Activated CD4-positive, alpha-beta T cell treated with anti-CD3 and anti-CD28 coated beads for 36 hours (primary cell): ENCODE measurements at regions of chr19 and their contacts with region 1.

Region 1: DNA sequence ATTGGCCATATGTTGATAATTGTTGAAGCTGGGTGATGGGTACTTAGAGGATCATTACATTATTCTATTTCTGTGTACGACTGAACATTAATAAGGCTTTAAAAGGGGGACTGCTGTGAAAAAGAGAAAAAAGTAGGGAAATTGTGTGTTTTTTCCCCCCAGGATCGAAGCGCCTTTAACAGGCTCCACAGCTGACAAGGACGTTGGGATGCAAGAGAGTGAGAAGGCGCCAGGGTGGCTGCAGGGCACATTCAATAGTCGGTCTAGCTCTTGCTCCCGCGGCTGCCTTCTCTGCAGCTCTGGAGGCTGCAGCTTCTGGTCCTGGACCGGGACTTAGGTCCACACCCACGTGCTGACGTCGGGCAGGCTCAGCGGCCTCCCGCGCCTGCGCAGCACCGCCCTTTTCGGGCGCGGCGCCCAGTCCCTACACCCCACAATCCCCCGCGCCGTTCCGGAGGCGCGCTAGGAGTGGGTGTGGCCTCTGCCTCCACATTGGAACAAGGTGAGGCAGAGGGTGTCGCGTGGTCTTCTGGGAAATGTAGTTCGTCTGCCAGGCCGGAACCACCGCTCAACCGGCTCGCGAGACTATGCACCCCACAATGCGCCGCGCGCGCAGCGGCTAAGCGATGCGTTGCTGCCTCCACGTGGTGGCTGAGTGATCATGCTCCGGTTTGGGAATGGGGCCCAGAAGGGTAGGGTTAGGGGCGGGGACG is 4.9 kb upstream of the LRFN3 start:
- DNase-seq: peak; percentile 100
- ATAC-seq: peak; percentile 96
- H3K4me3 Mint-ChIP-seq: peak overlapping the region; percentile 67
- H3K27ac Mint-ChIP-seq: peak overlapping the region; percentile 86
- H3K4me1 Mint-ChIP-seq: peaks cover 26% of the 10 kb centered on the region
- H3K27me3 Mint-ChIP-seq: no peaks in the 10 kb centered on the region

Region 2: GRCh38 chr19:35347171-35347929 is 584.0 kb before region 1 on chr19 and contains the start of gene FFAR1:
- CTCF ChIA-PET with region 1: no interaction called
- POLR2A ChIA-PET with region 1: no interaction called
- intact Hi-C with region 1: no loop called
- DNase-seq: peak; percentile 85
- ATAC-seq: peak; percentile 74
- H3K4me3 Mint-ChIP-seq: peak within 1 kb of the TSS; percentile 67
- H3K27ac Mint-ChIP-seq: peak within 1 kb of the TSS; percentile 99
- H3K4me1 Mint-ChIP-seq: peaks cover 36% of the 10 kb centered on the region
- H3K27me3 Mint-ChIP-seq: peaks cover 3% of the 10 kb centered on the region
- total RNA-seq, gene FFAR1: 0.23 to 0.35 TPM

Region 3: GRCh38 chr19:35648017-35648961 is 283.0 kb before region 1 on chr19 and contains the start of gene COX6B1:
- CTCF ChIA-PET with region 1: no interaction called
- POLR2A ChIA-PET with region 1: no interaction called
- intact Hi-C with region 1: loop called in 1 of 2 experiments (anchors 1 kb)
- DNase-seq: peak; percentile 95
- ATAC-seq: peak; percentile 76
- H3K4me3 Mint-ChIP-seq: peak within 1 kb of the TSS; percentile 92
- H3K27ac Mint-ChIP-seq: peak within 1 kb of the TSS; percentile 84
- H3K4me1 Mint-ChIP-seq: peaks cover 39% of the 10 kb centered on the region
- H3K27me3 Mint-ChIP-seq: no peaks in the 10 kb centered on the region
- total RNA-seq, gene COX6B1: 385 to 437 TPM

Region 4: DNA sequence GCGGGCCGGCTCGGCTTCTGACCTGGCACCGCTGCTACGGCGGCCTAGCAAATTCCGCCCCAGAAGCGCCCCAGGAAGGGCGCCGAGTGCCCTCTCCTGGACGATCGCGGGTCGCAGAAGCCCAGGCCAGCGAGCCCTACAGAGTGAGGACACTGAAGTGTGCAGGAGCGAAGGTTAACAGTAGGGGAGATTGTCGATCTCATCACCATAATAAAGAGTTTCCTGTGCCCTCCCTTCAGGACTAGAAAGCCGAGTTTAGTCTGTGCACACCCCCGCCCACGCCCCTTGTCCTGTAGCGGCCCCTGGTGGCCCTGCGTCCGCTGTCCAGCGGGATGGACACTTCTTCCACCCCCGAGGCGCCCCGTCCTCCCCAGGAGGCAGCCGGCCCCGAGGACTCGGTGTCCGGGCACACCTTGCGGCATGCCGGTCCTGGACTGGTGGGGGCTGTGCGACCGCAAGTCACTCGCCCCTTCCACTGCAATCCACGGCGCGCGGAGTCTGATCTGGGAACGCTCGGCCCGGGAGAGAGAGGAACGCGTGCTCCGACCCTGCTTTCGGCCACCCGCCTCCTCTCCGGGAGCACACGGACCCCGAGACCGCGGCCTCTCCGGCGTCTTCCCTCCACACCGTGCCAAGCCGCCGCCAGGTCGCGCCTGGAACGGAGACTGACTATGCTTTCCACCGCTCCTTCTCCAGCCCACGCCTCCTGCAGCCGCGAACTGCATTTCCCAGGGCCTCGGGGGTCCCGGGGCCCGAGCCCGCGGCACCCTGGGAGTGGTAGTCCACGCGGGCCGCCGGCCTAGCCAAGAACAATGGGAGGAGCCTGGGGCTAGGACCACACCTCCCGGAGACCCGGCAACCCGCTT is 214.3 kb before region 1 on chr19:
- CTCF ChIA-PET with region 1: no interaction called
- POLR2A ChIA-PET with region 1: interaction called, 6 read pairs
- intact Hi-C with region 1: loop called (anchors 1 kb)
- DNase-seq: peak; percentile 98
- ATAC-seq: peak; percentile 61
- H3K4me3 Mint-ChIP-seq: peak overlapping the region; percentile 97
- H3K27ac Mint-ChIP-seq: peak overlapping the region; percentile 90
- H3K4me1 Mint-ChIP-seq: peaks cover 41% of the 10 kb centered on the region
- H3K27me3 Mint-ChIP-seq: no peaks in the 10 kb centered on the region

Region 5: DNA sequence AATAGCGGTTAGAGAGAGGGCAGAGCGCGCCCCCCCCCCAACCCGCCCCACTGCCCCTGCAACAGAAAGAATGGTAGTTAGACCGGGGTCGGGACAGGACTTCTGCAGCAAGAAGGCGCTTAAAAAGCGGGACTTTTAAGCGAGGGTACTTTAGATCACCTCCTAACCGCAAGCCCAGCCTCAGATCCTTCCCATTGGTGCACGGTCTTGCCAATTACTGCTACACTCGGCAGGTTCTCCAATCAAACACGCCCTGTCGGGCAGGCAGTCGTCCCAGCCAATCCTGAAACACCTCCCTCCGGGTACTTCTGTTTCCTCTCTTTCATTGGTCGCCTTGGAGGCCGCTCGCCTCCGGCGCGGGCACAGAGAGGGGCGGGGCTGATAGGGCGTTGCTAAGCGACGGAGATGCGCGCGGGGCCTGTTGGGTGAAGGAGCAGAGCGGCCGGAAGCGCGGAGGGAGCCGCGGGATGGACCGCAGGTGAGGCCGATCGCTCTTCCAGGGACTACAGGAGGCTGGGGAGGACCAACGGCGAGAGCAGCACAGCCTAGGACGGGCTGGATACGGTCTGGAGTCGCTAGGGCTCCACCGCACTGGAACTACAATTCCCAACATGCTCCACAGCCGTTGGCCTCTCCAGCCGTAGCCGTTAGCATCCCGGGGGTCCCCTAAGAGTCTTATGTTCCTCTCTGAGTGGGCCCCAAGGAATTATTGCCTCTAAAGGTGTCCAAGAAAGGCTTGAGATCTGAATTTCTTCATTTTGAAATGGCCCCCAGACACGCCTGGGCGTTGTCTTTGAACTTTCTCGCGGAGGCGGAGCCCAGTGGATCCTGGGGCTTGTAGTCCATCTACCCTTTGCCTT is 173.3 kb before region 1 on chr19 and contains the start of gene PROSER3:
- CTCF ChIA-PET with region 1: no interaction called
- POLR2A ChIA-PET with region 1: no interaction called
- intact Hi-C with region 1: loop called in 1 of 2 experiments (anchors 1 kb)
- DNase-seq: peak; percentile 99
- ATAC-seq: peak; percentile 98
- H3K4me3 Mint-ChIP-seq: peak within 1 kb of the TSS; percentile 85
- H3K27ac Mint-ChIP-seq: peak within 1 kb of the TSS; percentile 91
- H3K4me1 Mint-ChIP-seq: peaks cover 29% of the 10 kb centered on the region
- H3K27me3 Mint-ChIP-seq: peaks cover 4% of the 10 kb centered on the region
- total RNA-seq, gene PROSER3: 39.8 to 62.8 TPM

Region 6: DNA sequence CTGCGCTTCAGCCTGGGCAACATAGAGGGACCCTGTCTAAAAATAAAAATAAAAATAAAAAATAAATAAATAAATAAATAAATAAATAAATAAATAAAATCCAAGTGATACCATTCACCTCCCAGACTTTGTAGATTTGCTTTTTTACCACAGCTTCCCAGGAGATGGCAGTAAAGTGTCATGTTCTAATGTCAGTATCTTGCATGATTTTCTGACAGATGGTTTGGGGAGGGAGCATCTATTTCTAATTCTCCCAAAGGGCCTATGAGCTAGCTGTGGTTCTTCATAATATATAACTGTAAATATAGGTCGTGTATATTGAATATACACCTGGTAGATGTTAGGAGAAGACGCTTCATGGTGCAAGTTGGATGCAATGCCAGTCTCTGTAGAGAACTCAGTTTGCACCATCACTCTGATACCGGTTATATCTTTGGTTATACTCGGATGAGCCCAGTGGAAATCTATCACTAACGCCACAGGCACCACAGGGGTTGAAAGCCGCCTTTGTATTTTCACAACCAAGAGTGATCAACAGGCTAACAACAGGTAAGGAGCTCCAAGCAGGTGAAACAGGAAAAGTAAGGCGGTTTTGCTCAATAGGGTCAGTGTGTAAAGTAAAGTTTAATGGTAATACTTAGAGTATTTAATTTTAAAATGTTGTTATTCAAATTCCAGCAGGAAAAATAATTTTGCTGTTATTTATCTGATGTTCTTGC is 49.0 kb before region 1 on chr19:
- CTCF ChIA-PET with region 1: interaction called, 52 read pairs
- POLR2A ChIA-PET with region 1: interaction called, 3 read pairs
- intact Hi-C with region 1: loop called (anchors 1 kb)
- DNase-seq: peak; percentile 35
- ATAC-seq: peak; percentile 53
- H3K4me3 Mint-ChIP-seq: no peak overlapping the region
- H3K27ac Mint-ChIP-seq: no peak overlapping the region
- H3K4me1 Mint-ChIP-seq: peaks cover 2% of the 10 kb centered on the region
- H3K27me3 Mint-ChIP-seq: peaks cover 12% of the 10 kb centered on the region

Region 7: GRCh38 chr19:35995048-35995993 is 64.0 kb after region 1 on chr19 and contains the start of gene SDHAF1:
- CTCF ChIA-PET with region 1: interaction called, 4 read pairs
- POLR2A ChIA-PET with region 1: no interaction called
- intact Hi-C with region 1: loop called in 1 of 2 experiments (anchors 1 kb)
- DNase-seq: peak; percentile 98
- ATAC-seq: peak; percentile 85
- H3K4me3 Mint-ChIP-seq: peak within 1 kb of the TSS; percentile 94
- H3K27ac Mint-ChIP-seq: peak within 1 kb of the TSS; percentile 96
- H3K4me1 Mint-ChIP-seq: peaks cover 34% of the 10 kb centered on the region
- H3K27me3 Mint-ChIP-seq: no peaks in the 10 kb centered on the region
- total RNA-seq, gene SDHAF1: 16.0 to 19.2 TPM